ENCODE measurements at regions of chr9 and their contacts with region 1.

Region 1: DNA sequence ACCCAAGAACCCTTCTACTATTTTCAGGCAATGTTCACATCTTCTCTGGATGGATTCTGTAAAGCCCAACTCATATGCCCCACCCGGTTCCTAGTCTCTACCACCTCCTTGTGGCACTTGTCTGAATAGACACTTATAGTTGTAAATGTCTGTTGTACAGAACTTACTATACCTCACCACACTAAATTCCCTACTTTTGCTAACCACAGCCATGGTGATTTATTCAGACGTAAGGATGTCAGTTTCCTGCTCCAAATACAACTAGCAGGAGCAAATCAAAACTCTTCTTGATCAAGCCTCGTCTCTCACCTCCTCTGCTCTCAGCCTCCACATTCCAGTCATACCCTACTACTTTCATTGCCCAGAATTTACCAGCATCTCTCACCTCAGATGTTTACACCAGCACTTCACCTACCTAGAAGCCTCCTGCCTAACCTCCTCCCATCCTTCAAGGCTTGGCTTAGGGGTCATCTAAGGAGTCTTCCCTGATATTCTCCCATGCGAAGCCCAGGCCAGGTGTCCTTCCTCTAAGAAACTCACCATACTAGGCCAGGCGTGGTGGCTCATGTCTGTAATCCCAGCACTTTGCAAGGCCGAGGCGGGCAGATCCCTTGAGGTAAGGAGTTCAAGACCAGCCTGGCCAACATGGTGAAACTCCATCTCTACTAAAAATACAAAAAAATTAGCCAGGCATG is 75.5 kb downstream of the MAPKAP1 start:
- DNase-seq: peak; percentile 38 to 65 (median 58)
- H3K4me3 ChIP-seq: peak overlapping the region in 1 of 3 experiments; percentile 16
- H3K4me3 Mint-ChIP-seq: peak overlapping the region; percentile 32 to 75
- H3K27ac ChIP-seq: peak overlapping the region; percentile 81 to 98
- H3K27ac Mint-ChIP-seq: peak overlapping the region; percentile 93 to 99 (median 98)
- H3K4me1 ChIP-seq: peaks cover 65 to 78% of the 10 kb centered on the region in 2 donors
- H3K4me1 Mint-ChIP-seq: peaks cover 80% of the 10 kb centered on the region
- H3K27me3 ChIP-seq: no peaks in the 10 kb centered on the region
- H3K27me3 Mint-ChIP-seq: peaks cover 0 to 2% (median 0%) of the 10 kb centered on the region in 3 donors
- CTCF ChIP-seq: peak; percentile 80

Region 2: GRCh38 chr9:125650271-125650737 is 18.8 kb after region 1 on chr9:
- intact Hi-C with region 1: loop called (anchors 2 kb)
- DNase-seq: peak; percentile 90 to 96 (median 94)
- H3K4me3 ChIP-seq: peak overlapping the region; percentile 2 to 38 (median 29)
- H3K4me3 Mint-ChIP-seq: peak overlapping the region; percentile 68 to 93
- H3K27ac ChIP-seq: peak overlapping the region; percentile 81 to 100
- H3K27ac Mint-ChIP-seq: peak overlapping the region; percentile 98 to 100 (median 100)
- H3K4me1 ChIP-seq: peaks cover 67 to 76% of the 10 kb centered on the region in 2 donors
- H3K4me1 Mint-ChIP-seq: peaks cover 74% of the 10 kb centered on the region
- H3K27me3 ChIP-seq: no peaks in the 10 kb centered on the region
- H3K27me3 Mint-ChIP-seq: peaks cover 0 to 2% (median 0%) of the 10 kb centered on the region in 3 donors
- CTCF ChIP-seq: no peak

Measured in CD14-positive monocyte (primary cell).